GM10248 (cell line): ENCODE measurements at regions of chr12 and their contacts with region 1.

Region 1: GRCh38 chr12:57815177-57816000 is 3.1 kb downstream of the AVIL start:
- DNase-seq: no peak
- CTCF ChIP-seq: no peak

Region 2: DNA sequence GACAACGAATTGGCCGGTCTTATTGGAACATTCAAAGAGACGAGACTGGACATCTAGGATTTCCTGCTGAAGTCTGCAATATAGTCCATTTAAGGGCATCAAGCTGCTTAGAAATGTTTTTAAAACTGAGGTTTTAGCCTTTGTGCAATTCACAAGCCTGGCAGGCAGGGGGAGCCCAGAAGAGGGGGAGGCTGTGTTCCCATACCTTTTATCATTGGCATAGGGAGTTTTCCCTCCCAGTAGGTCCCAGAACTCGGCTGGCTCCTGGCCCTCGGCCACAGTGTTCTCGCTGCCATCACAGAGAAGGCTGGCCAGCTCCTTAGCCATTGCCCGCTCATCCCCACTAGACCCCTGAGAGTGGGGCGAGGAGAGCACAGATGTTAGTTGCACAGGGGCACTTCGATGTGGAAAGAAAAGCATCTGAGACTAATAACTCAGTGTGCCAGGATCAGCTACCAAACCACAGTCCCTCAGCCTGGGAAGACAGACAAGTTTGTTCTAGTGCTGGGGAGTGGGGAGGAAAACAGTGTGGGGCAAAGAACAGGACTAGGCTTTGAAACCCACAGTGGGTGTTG is 12.0 kb before region 1 on chr12:
- CTCF ChIA-PET with region 1: interaction called, 30 read pairs
- POLR2A ChIA-PET with region 1: no interaction called
- DNase-seq: peak; percentile 42
- CTCF ChIP-seq: peak; percentile 64

Region 3: DNA sequence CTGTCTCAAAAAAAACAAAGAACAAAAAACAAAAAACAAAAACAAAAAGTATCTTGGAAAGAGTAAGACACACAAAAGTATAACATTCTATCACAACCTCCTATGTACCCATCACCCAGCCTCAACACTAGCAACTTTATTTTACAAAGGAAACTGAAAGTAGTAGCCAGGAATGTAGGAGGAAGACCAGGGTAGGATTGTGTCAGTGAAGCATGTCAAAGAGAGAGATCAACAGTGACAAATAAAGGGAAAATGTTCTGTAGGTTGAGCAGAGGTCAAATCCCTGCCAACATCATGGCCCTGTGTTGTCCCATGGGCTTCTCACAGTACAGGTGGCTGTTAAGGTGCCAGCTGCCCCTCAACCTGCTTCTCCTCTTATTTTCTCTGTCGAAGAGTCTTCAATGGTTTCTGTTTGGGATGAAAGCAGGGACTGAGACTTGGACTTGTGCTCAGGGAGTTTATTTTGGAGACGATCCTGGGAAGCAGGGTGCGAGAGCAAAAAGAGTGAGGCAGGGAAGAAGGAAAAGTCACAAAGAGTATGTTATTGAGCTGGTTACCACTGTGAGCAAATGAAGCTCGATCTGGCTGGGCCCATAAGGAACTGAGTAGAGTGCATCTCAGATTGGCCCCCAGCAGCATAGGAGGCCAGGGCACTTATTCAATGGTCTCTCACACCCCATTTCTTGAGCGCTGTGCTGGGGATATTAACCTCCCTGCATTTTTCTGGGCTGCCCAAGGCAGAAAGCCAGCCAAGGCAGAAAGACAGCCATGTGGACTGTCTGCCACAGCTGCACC is 60.6 kb after region 1 on chr12:
- CTCF ChIA-PET with region 1: no interaction called
- POLR2A ChIA-PET with region 1: no interaction called
- DNase-seq: no peak
- CTCF ChIP-seq: no peak